B cell (primary cell): ENCODE measurements at regions of chr15 and their contacts with region 1.

Region 1: GRCh38 chr15:84716036-84716799 is at the start of gene SEC11A:
- DNase-seq: peak; percentile 96
- ATAC-seq: peak; percentile 96
- H3K4me3 ChIP-seq: peak within 1 kb of the TSS; percentile 70 to 99 (median 87)
- H3K4me3 Mint-ChIP-seq: peak within 1 kb of the TSS; percentile 93
- H3K27ac ChIP-seq: peak within 1 kb of the TSS; percentile 82 to 92
- H3K27ac Mint-ChIP-seq: peak within 1 kb of the TSS; percentile 94
- H3K4me1 ChIP-seq: peaks cover 28 to 39% of the 10 kb centered on the region in 2 donors
- H3K4me1 Mint-ChIP-seq: peaks cover 46% of the 10 kb centered on the region
- H3K27me3 ChIP-seq: no peaks in the 10 kb centered on the region
- H3K27me3 Mint-ChIP-seq: no peaks in the 10 kb centered on the region
- CTCF ChIP-seq: no peak
- total RNA-seq, gene SEC11A: 69.8 and 78.0 TPM in 2 replicates

Region 2: DNA sequence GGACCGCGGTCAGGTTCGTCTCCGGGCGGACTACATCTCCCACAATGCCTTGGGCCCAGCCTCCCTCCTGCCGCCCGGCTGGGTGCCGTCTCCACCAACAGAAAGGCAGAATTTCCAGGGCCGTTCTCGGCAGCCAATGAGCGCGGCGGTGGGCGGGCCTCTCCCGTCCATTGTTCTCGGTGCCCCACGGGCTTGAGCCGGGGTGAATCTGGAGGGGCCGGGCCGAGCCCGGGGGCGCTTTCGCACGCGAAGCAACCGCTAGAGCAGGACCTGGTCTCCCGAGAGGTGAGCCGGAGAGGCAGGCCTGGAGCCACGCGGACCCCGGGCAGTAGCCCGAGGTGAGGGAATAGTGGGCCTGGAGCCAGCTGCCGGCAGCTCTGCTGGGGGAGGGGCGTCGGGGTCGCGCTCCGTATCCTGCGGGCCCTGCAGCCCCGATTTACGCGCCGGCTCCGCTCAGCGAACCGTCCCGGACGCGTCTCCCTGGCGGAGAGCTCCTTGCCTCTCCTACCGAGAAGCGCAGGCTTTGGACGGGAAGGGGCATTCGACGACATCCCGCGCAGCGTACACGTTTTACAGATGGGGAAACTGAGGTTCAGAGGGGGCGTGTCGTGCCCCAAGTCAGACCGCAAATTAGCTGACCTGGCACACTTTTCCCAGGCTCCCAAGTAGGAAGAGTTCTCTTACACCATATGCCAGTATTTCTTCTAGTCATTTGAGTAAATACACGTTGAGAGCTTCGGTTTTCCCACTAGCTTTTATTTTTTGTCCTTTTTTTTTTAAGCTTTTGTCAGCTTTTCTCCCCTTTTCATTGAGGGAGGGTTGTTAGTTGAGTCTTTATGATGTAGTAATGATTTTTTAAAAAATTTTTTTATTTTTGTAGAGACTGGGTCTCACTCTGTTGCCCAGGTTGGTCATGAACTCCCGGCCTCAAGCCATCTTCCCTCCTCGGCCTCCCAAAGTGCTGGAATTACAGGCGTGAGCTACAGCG is 115.1 kb before region 1 on chr15 and contains the start of gene ZSCAN2:
- CTCF ChIA-PET with region 1: interaction called, 4 read pairs
- POLR2A ChIA-PET with region 1: interaction called, 4 read pairs
- intact Hi-C with region 1: loop called (anchors 1 kb)
- DNase-seq: peak; percentile 93
- ATAC-seq: peak; percentile 94
- H3K4me3 ChIP-seq: peak within 1 kb of the TSS; percentile 78 to 95 (median 86)
- H3K4me3 Mint-ChIP-seq: peak within 1 kb of the TSS; percentile 99
- H3K27ac ChIP-seq: peak within 1 kb of the TSS; percentile 32 to 47
- H3K27ac Mint-ChIP-seq: peak within 1 kb of the TSS; percentile 96
- H3K4me1 ChIP-seq: peaks cover 29 to 52% of the 10 kb centered on the region in 2 donors
- H3K4me1 Mint-ChIP-seq: peaks cover 64% of the 10 kb centered on the region
- H3K27me3 ChIP-seq: no peaks in the 10 kb centered on the region
- H3K27me3 Mint-ChIP-seq: no peaks in the 10 kb centered on the region
- CTCF ChIP-seq: no peak
- total RNA-seq, gene ZSCAN2: 16.2 and 18.6 TPM in 2 replicates

Region 3: DNA sequence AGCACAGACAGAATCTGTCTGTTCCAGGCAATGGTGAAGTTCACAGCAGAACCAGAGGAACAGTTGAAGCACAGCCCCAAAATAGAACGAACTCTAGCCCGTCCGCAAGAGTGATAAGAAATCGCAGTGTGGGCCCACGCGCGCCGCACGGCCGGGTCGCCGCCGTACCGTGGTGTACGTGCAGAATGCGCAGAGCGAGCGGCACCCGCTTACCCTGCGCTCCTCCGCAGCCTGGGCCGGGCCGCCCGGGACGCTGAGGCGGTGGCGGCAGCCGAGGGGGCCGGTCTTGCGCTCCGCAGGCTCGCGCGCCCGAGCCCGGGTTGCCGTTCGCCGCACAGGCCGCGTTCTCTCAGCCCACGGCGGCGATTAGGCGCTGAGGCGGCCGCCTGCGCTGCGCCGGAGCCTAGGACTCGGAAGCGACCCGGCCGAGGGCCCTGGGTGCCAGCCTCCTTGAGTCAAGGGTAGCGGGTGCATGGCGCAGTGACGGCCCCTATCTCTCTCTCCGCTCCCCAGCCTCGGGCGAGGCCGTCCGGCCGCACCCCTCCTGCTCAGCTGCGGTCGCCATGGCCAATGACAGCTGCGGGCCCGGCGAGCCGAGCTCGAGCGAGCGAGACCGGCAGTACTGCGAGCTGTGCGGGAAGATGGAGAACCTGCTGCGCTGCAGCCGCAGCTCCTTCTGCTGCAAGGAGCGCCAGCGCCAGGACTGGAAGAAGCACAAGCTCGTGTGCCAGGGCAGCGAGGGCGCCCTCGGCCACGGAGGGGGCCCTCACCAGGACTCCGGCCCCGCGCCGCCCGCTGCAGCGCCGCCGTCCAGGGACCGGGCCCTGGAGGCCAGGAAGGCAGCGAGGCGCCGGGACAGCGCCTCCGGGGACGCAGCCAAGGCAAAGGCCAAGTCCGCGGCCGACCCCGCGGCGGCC is 82.6 kb before region 1 on chr15:
- CTCF ChIA-PET with region 1: interaction called, 4 read pairs
- POLR2A ChIA-PET with region 1: interaction called, 6 read pairs
- intact Hi-C with region 1: loop called (anchors 1 kb)
- DNase-seq: peak; percentile 82
- ATAC-seq: peak; percentile 56
- H3K4me3 ChIP-seq: peak overlapping the region; percentile 61 to 71 (median 65)
- H3K4me3 Mint-ChIP-seq: peak overlapping the region; percentile 97
- H3K27ac ChIP-seq: peak overlapping the region; percentile 50 to 71
- H3K27ac Mint-ChIP-seq: peak overlapping the region; percentile 95
- H3K4me1 ChIP-seq: peaks cover 26 to 41% of the 10 kb centered on the region in 2 donors
- H3K4me1 Mint-ChIP-seq: peaks cover 41% of the 10 kb centered on the region
- H3K27me3 ChIP-seq: no peaks in the 10 kb centered on the region
- H3K27me3 Mint-ChIP-seq: no peaks in the 10 kb centered on the region
- CTCF ChIP-seq: no peak

Region 4: GRCh38 chr15:84734794-84735479 is 18.7 kb after region 1 on chr15:
- CTCF ChIA-PET with region 1: interaction called, 25 read pairs
- POLR2A ChIA-PET with region 1: interaction called, 48 read pairs
- intact Hi-C with region 1: loop called (anchors 1 kb)
- DNase-seq: peak; percentile 91
- ATAC-seq: peak; percentile 91
- H3K4me3 ChIP-seq: peak overlapping the region; percentile 0 to 58 (median 39)
- H3K4me3 Mint-ChIP-seq: peak overlapping the region; percentile 77
- H3K27ac ChIP-seq: peak overlapping the region; percentile 45 to 61
- H3K27ac Mint-ChIP-seq: peak overlapping the region; percentile 87
- H3K4me1 ChIP-seq: peaks cover 39 to 55% of the 10 kb centered on the region in 2 donors
- H3K4me1 Mint-ChIP-seq: peaks cover 40% of the 10 kb centered on the region
- H3K27me3 ChIP-seq: no peaks in the 10 kb centered on the region
- H3K27me3 Mint-ChIP-seq: no peaks in the 10 kb centered on the region
- CTCF ChIP-seq: no peak

Region 5: DNA sequence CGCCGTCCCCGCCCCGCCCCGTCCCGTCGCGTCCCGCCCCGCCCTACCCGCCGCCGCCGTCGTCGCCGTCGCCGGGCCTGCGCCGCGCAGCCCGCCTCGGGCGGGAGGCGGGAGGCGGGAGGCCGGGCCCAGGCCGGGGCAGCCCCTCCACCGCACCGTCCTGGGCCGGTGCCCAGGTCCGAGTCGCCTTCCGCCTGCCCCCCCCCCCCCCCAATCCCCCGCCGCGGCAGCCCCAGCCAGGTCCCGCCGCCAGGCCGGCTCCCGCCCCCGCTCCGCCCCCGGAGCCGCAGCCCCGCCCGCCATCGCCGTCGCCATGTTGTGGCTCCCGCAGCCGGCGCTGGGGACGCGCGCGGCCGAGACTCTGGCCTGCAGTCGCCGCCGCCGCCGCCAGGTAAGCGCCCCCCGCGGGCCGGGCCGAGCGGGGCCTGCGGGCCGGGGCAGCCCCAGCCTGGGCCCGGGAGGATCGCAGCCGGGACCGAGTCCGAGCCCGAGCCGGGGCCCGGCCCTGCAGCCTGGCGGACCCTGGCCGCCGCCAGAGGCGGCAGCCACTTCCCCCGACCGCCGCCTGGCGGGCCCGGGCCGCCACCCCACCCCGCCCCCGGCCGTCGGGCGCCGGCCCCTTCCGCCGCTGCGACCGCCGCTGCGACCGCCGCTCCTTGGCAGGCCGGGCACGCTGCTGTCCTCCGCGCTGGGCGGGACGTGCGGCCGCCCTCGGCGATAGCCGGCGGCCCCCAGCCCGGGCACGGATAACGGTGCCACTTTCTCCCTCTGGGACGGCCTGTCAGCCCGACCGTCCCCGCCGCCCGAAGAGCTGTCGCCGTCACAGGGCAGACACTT is 32.3 kb after region 1 on chr15 and contains the start of gene ZNF592:
- CTCF ChIA-PET with region 1: interaction called, 33 read pairs
- POLR2A ChIA-PET with region 1: interaction called, 49 read pairs
- intact Hi-C with region 1: loop called (anchors 1 kb)
- DNase-seq: peak; percentile 90
- ATAC-seq: peak; percentile 66
- H3K4me3 ChIP-seq: peak within 1 kb of the TSS; percentile 69 to 93 (median 79)
- H3K4me3 Mint-ChIP-seq: peak within 1 kb of the TSS; percentile 100
- H3K27ac ChIP-seq: peak within 1 kb of the TSS; percentile 86 to 97
- H3K27ac Mint-ChIP-seq: peak within 1 kb of the TSS; percentile 98
- H3K4me1 ChIP-seq: peaks cover 52 to 65% of the 10 kb centered on the region in 2 donors
- H3K4me1 Mint-ChIP-seq: peaks cover 66% of the 10 kb centered on the region
- H3K27me3 ChIP-seq: no peaks in the 10 kb centered on the region
- H3K27me3 Mint-ChIP-seq: no peaks in the 10 kb centered on the region
- CTCF ChIP-seq: no peak
- total RNA-seq, gene ZNF592: 59.5 and 64.4 TPM in 2 replicates

Region 6: DNA sequence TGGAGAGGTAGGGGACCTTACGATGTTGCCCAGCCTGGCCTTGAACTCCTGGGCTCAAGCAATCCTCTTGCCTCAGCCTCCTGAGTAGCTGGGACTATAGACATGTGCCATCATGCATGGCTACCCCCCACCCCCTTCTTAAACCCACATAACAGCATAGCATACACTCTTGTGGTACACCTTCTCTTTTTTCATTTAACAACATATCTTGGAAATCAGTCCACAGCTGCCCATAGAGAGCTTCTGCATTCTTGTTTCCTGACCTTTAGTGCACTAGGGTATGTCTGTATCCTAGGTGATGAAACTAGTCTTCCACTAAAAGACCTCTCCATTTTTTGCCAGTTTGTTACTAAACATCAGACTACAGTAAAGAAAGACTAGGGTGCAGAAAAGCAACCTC is 201.2 kb after region 1 on chr15:
- CTCF ChIA-PET with region 1: no interaction called
- POLR2A ChIA-PET with region 1: no interaction called
- intact Hi-C with region 1: no loop called
- DNase-seq: no peak
- ATAC-seq: no peak
- H3K4me3 ChIP-seq: no peak overlapping the region
- H3K4me3 Mint-ChIP-seq: no peak overlapping the region
- H3K27ac ChIP-seq: no peak overlapping the region
- H3K27ac Mint-ChIP-seq: no peak overlapping the region
- H3K4me1 ChIP-seq: no peaks in the 10 kb centered on the region
- H3K4me1 Mint-ChIP-seq: no peaks in the 10 kb centered on the region
- H3K27me3 ChIP-seq: peaks cover 0 to 4% (median 0%) of the 10 kb centered on the region in 4 experiments
- H3K27me3 Mint-ChIP-seq: peaks cover 10% of the 10 kb centered on the region
- CTCF ChIP-seq: no peak